ENCODE measurements at regions of chr22 and their contacts with region 1.

Region 1: GRCh38 chr22:41946629-41947423 is at the start of gene CENPM:
- DNase-seq: peak; percentile 94
- H3K4me3 Mint-ChIP-seq: peak within 1 kb of the TSS; percentile 88
- H3K27ac Mint-ChIP-seq: peak within 1 kb of the TSS; percentile 85
- H3K4me1 Mint-ChIP-seq: peaks cover 55% of the 10 kb centered on the region
- H3K27me3 Mint-ChIP-seq: no peaks in the 10 kb centered on the region
- total RNA-seq, gene CENPM: 71.8 to 81.2 TPM

Region 2: GRCh38 chr22:41666661-41667258 is 280.1 kb before region 1 on chr22:
- CTCF ChIA-PET with region 1: interaction called, 11 read pairs
- POLR2A ChIA-PET with region 1: interaction called, 11 read pairs
- DNase-seq: peak; percentile 96
- H3K4me3 Mint-ChIP-seq: peak overlapping the region; percentile 86
- H3K27ac Mint-ChIP-seq: peak overlapping the region; percentile 98
- H3K4me1 Mint-ChIP-seq: peaks cover 21% of the 10 kb centered on the region
- H3K27me3 Mint-ChIP-seq: no peaks in the 10 kb centered on the region

Region 3: DNA sequence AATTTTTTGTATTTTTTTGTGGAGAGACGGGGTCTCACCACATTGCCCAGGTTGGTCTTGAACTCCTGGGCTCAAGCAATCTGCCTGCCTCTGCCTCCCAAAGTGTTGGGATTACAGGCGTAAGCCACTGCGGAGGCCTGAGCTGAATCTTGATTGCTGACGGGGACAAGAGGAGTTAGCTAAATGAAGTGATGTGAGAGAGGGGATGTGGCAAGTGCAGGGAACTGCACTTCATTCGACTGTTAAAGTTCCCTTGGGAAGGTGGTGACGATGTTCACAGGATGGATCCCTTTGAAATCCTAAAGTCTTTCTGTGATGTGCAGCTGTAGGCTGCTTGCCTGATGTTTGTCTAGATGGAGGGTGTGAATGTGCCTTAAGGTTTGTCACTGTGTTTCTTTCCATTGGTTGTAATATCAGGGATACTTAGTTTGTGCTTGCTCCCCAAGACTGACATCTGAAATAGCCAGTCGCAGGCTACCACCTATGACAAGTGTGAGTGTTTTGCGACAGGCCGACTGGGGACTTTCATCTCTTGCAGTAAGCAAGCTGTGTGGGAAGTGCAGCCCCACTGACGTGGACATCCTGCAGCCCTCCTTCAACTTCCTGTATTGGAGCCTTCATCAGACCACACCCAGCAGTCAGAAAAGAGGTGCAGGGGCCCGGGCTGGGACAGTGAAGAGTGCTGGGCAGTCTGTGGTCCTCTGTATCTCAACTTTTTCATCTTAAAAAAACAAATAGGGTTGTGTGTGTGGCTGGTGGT is 165.9 kb before region 1 on chr22:
- CTCF ChIA-PET with region 1: interaction called, 6 read pairs
- POLR2A ChIA-PET with region 1: interaction called, 33 read pairs
- DNase-seq: peak; percentile 96
- H3K4me3 Mint-ChIP-seq: peak overlapping the region; percentile 85
- H3K27ac Mint-ChIP-seq: peak overlapping the region; percentile 97
- H3K4me1 Mint-ChIP-seq: peaks cover 46% of the 10 kb centered on the region
- H3K27me3 Mint-ChIP-seq: no peaks in the 10 kb centered on the region

Region 4: GRCh38 chr22:41925655-41926460 is 21.0 kb before region 1 on chr22:
- CTCF ChIA-PET with region 1: interaction called, 31 read pairs
- POLR2A ChIA-PET with region 1: interaction called, 32 read pairs
- DNase-seq: peak; percentile 77
- H3K4me3 Mint-ChIP-seq: peak overlapping the region; percentile 60
- H3K27ac Mint-ChIP-seq: no peak overlapping the region
- H3K4me1 Mint-ChIP-seq: peaks cover 7% of the 10 kb centered on the region
- H3K27me3 Mint-ChIP-seq: peaks cover 26% of the 10 kb centered on the region

Region 5: DNA sequence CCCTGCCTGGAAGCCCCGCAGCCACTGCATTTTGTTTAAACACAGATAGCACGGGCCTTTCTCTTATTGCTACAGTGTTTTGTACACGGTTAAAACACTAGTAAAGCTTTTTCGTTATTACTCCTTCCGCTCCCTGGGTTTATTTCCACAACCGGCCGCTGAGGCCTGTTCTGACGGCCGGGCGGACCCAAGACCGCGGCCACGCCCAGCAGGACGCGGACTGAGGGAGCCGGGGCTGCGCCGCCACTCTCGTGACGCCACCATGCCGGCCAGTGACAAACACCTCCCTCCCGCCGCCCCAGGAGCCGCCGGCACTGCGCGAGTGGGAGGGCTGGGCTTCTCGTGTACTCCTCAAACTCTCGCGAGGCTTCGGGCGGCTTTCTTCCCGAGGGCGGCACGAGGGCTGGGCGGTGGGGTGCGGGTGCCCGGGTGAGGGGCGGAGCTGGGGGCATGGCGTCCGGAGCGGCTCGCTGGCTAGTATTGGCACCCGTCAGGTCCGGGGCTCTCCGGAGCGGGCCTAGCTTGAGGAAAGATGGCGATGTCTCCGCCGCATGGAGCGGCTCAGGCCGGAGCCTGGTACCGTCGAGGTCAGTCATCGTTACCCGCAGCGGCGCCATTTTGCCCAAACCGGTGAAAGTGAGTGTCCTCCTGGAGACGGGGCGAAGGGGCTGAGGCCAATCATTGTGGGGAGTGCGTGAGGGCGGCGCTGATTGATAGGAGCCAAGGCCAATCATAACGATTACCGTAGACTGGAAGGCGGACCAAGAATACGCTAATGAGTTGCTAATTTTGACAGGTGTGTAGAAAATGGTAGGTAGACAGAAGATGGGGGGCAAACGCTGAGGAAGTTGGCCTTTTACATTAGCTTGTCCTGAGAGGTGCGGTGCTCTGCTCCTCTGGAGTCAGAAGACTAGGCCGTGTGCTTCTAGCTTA is 132.8 kb after region 1 on chr22 and contains the start of gene SMDT1:
- CTCF ChIA-PET with region 1: no interaction called
- POLR2A ChIA-PET with region 1: interaction called, 23 read pairs
- DNase-seq: peak; percentile 98
- H3K4me3 Mint-ChIP-seq: peak within 1 kb of the TSS; percentile 95
- H3K27ac Mint-ChIP-seq: peak within 1 kb of the TSS; percentile 92
- H3K4me1 Mint-ChIP-seq: peaks cover 42% of the 10 kb centered on the region
- H3K27me3 Mint-ChIP-seq: no peaks in the 10 kb centered on the region
- total RNA-seq, gene SMDT1: 92.7 to 98.1 TPM